ENCODE measurements at regions of chr16 and their contacts with region 1.

Region 1: GRCh38 chr16:87278191-87279095 is 38.7 kb downstream of the C16orf95 start:
- DNase-seq: peak; percentile 88
- CTCF ChIP-seq: peak; percentile 82

Region 2: GRCh38 chr16:86554917-86555703 is 723.3 kb before region 1 on chr16 and contains the start of gene MTHFSD:
- in situ Hi-C with region 1: loop called (anchors 25 kb)
- DNase-seq: peak; percentile 99
- CTCF ChIP-seq: no peak

Region 3: GRCh38 chr16:87017365-87018012 is 261.0 kb before region 1 on chr16:
- in situ Hi-C with region 1: no loop called
- DNase-seq: no peak
- CTCF ChIP-seq: no peak

Region 4: GRCh38 chr16:87178977-87179376 is 99.5 kb before region 1 on chr16:
- in situ Hi-C with region 1: no loop called
- DNase-seq: no peak
- CTCF ChIP-seq: no peak

Measured in GM13976 (cell line).